ENCODE measurements at regions of chr22 and their contacts with region 1.

Region 1: GRCh38 chr22:39343259-39344048 is 6.3 kb upstream of the SYNGR1 start:
- DNase-seq: peak; percentile 73
- CTCF ChIP-seq: peak; percentile 58

Region 2: DNA sequence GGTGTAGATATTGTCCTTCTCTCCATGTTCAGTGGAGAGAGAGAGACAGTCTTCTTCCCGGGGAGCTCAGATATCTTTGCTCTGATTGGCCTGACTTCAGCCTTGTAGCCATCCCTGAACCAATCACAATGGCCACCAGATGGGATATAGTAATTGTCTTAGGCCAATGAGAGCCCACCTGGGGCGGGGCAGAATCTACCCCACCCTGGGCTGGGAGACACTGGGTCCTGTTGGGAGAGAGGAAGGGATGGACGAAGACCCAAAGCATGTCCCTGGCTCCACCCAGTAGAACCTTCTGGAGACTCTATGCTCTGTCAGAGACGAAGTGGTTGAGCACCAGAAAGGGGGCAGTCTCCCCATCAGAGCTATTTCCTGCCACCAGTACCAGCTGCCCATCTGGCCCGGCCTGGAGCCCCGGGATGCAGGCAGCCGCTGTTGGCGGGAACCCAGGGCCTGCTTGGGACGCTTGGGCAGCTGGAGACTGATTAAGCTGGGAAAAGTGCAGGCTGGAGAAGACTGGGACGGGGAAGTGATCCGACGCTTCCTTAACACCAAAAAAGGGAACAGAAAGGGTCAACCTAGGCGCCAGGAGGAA is 159.4 kb before region 1 on chr22:
- CTCF ChIA-PET with region 1: no interaction called
- POLR2A ChIA-PET with region 1: no interaction called
- DNase-seq: no peak
- CTCF ChIP-seq: no peak

Region 3: DNA sequence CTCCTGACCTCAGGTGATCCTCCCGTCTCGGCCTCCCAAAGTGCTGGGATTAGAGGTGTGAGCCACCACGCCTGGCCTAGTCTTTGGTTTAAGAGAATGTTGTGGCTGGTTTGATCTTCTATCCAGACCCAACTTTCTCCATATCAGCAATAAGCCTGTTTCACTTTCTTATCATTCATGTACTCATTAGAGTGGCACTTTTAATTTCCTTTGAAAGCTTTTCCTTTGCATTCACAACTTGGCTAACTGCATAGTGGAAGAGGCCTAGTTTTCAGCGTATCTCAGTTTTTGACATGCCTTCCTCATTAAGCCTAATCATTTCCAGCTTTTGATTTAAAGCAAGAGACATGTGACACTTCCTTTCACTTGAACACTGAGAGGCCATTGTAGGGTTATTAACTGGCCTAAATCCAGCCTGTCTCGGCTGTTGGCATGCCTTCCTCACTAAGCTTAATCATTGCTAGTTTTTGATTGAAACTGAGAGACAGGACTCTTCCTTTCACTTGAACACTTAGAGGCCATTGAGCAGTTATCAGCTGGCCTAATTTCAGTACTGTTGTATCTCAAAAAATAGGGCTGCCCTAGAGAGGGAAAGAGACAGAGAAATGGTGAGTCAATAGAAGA is 10.9 kb before region 1 on chr22:
- CTCF ChIA-PET with region 1: interaction called, 41 read pairs
- POLR2A ChIA-PET with region 1: interaction called, 5 read pairs
- DNase-seq: no peak
- CTCF ChIP-seq: no peak